ENCODE measurements at regions of chr2 and their contacts with region 1.

Region 1: DNA sequence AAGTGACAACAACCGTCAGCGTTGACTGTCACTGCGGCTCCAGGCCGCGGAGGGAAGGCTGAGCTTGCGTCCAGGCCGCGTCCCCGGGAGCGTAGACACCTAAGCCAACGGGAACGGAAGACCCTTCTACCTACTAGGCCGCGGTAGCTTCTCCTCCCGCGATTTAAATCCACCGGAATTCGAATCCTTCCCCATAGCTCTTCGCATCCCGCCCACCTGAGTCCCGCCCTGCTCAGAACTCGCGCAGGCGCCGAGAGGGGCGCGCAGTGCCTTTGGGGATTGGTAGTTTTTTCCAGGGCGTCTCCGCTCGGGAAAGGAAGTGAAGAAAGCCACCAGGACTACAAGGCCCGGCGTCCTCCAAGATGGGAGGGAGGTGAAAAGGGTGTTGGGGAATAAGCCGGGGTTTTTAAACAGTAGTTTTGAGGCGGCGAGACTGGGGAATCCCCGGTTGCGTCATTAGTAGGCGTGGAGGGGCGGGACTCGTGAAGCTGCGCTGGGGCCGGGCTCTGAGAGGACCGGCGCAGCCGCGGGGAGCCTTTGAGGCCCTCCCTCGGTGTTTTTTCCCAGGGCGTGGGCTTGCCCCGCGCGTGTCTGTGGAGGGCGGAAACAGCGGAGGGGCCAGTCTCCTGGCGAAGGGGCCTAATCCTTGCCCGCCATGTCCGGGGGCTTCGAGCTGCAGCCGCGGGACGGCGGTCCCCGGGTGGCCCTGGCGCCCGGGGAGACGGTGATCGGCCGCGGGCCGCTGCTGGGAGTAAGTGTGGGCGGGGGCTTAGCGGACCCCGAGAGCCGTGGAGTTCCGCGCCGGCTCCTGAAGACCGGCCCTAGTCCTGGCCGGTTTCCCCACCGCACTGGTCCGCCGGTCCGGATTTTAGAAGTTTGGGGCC is at the starts of genes APLF and FBXO48:
- DNase-seq: peak; percentile 96
- CTCF ChIP-seq: no peak

Region 2: DNA sequence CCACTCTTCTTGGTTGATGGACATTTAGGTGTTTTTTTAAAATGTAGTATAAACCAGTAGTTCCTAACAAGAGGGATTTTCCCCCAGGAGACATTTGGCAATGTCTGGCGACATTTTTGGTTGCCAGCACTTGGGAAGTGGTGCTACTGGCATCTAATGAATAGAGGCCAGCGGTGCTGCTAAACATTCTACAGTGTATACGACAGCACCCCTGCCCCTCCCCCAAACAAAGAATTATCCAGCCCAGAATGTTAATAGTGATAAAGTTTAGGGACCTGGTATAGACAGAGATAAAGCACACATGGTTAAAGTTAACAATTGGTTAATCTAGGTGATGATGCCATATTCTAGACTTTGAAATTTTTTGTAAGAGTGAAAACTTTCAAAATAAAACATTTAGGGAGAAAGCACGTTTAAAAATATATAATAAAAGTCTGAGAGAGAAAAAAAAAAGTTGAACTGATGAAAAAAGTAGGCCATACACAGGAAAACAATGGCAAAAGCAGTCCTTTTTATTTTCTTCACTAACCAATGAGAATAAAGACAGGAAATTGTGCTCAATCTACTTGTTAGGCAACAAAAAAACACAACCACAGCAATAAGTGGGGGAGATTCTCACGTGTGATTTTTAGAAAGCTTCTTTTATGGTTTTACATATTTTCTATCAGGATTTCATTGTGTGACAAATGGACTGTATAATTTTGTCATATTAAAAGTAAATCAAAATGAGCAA is 15.0 kb before region 1 on chr2:
- CTCF ChIA-PET with region 1: interaction called, 33 read pairs
- POLR2A ChIA-PET with region 1: no interaction called
- DNase-seq: no peak
- CTCF ChIP-seq: no peak

Region 3: DNA sequence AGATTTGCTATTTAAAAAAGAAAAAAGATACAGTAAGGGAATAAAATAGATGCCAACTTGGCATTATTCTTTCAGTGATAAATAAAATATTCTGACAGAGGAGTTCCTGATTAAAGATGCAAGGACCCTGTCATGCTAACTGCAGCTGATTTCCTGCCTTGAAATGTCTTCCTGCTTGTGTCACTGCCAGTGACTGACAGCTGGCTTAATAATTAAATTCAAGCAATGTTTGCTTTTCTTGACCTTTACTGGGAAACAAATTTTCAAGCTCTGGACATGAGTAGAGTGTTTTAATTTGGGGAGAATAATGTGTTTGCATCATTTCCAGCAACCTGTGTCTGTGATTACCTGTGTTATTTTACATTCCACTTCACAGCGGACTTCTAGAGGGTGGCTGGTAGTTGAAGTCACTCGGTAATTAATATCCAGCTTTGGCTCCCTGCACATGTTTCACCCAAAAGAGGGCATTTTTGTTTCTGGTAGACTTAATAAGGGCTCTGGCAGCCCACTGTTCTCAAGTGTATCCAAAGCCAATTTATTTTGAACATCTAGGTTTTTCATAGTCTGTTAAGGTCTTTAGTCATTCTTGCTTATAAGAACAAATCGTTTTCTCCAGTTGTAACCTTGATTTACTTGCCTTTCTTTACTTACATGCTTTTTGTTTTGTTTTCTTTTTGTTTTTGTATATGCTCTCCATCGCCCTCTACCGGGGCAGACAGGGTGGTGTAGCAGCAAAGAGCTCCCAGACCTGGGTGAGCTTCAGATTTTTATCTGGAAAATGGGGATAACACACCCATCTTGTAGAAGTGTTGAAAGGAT is 127.6 kb after region 1 on chr2:
- CTCF ChIA-PET with region 1: interaction called, 19 read pairs
- POLR2A ChIA-PET with region 1: no interaction called
- DNase-seq: peak; percentile 33
- CTCF ChIP-seq: peak; percentile 76

Region 4: DNA sequence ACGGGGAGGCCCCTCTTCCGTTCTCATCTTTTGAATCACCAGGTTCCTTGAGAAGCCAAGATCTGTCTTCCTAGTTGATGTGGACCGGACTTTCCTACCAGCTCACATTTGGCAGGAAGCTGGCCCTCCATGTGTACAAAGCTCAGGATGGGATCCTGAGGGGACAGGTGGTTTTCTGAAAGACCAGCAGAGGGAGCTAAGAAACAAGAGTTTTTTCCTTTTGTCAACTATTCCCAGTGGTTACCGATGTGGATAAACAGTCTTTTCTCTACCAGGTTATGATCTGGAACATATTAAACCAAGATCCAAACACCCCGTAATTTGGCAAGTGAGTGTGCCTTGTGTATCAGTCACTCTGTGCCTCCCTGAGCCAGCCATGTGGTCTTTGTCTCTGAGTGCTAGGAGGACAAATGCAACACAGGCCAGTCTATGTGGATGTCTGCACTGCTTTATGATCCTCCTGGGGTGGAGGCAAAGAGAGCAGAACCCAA is 242.1 kb after region 1 on chr2:
- CTCF ChIA-PET with region 1: interaction called, 25 read pairs
- POLR2A ChIA-PET with region 1: no interaction called
- DNase-seq: no peak
- CTCF ChIP-seq: peak; percentile 50

Region 5: GRCh38 chr2:68734688-68735525 is 267.6 kb after region 1 on chr2 and contains the start of gene ARHGAP25:
- CTCF ChIA-PET with region 1: interaction called, 12 read pairs
- POLR2A ChIA-PET with region 1: no interaction called
- DNase-seq: peak; percentile 44
- CTCF ChIP-seq: peak; percentile 17

Region 6: GRCh38 chr2:68909793-68910674 is 442.7 kb after region 1 on chr2:
- CTCF ChIA-PET with region 1: interaction called, 21 read pairs
- POLR2A ChIA-PET with region 1: interaction called, 3 read pairs
- DNase-seq: peak; percentile 70
- CTCF ChIP-seq: peak; percentile 90

Region 7: DNA sequence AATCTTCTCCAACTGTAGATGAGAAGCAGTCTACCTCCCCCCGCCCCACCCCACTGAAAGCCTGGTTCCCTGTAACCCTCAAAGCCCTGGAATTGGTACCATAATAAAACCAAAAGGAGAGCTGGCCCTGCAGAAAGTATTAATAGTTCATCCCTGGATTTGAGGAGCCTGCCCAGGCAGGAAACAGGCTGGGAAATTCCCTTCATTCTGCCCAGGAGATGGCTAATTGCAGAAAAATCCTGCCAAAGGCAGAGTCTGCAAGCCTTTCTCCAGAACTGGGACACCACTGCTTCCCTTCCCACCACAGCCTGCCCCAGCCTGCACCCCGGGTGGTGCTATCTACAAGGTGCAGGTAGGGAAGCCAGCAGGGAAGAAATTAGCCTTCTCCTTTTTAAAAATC is 469.1 kb after region 1 on chr2:
- CTCF ChIA-PET with region 1: interaction called, 13 read pairs
- POLR2A ChIA-PET with region 1: no interaction called
- DNase-seq: no peak
- CTCF ChIP-seq: no peak

Region 8: GRCh38 chr2:69253611-69254288 is 786.4 kb after region 1 on chr2:
- CTCF ChIA-PET with region 1: no interaction called
- POLR2A ChIA-PET with region 1: no interaction called
- DNase-seq: no peak
- CTCF ChIP-seq: no peak

Measured in GM10248 (cell line).